Naive thymus-derived CD8-positive, alpha-beta T cell (primary cell): ENCODE measurements at regions of chr2 and their contacts with region 1.

Region 1: GRCh38 chr2:30266051-30266621 is 34.8 kb downstream of the LBH start:
- DNase-seq: peak; percentile 35 to 83 (median 68)
- ATAC-seq: peak; percentile 88 to 97
- H3K4me3 Mint-ChIP-seq: peak overlapping the region; percentile 64 to 90 (median 85)
- H3K27ac Mint-ChIP-seq: peak overlapping the region; percentile 90 to 99 (median 98)
- H3K4me1 Mint-ChIP-seq: peaks cover 37 to 96% (median 90%) of the 10 kb centered on the region in 4 donors
- H3K27me3 Mint-ChIP-seq: no peaks in the 10 kb centered on the region

Region 2: DNA sequence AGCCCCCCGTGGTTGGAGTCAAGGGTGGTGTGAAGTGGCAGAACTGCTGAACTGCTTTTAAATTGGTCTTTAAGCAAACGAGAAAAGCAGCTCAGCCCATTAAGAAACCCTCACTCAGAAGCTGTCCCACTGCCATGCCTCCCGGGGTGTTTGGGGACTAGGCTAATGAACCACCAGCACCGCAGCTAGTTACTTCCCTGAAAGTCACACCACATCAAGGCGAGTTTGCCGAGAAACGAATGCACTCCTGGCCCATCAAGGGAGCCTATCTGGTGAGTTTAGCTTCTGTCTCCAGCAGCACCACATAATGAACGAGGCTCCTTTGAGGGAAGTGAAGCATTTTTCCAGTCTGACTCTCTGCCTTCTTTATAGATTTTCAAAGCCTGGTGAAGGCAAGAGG is 330.1 kb before region 1 on chr2:
- POLR2A ChIA-PET with region 1: no interaction called
- DNase-seq: no peak
- ATAC-seq: no peak
- H3K4me3 Mint-ChIP-seq: no peak overlapping the region
- H3K27ac Mint-ChIP-seq: no peak overlapping the region
- H3K4me1 Mint-ChIP-seq: no peaks in the 10 kb centered on the region
- H3K27me3 Mint-ChIP-seq: peaks cover 11 to 50% (median 23%) of the 10 kb centered on the region in 5 donors

Region 3: GRCh38 chr2:30072250-30072842 is 193.8 kb before region 1 on chr2:
- POLR2A ChIA-PET with region 1: no interaction called
- DNase-seq: peak; percentile 14 to 64 (median 38)
- ATAC-seq: peak; percentile 80 to 86
- H3K4me3 Mint-ChIP-seq: no peak overlapping the region
- H3K27ac Mint-ChIP-seq: peak overlapping the region in 2 of 10 donors; percentile 14 to 23
- H3K4me1 Mint-ChIP-seq: peaks cover 0 to 3% (median 0%) of the 10 kb centered on the region in 4 donors
- H3K27me3 Mint-ChIP-seq: peaks cover 18 to 66% (median 33%) of the 10 kb centered on the region in 5 donors

Region 4: DNA sequence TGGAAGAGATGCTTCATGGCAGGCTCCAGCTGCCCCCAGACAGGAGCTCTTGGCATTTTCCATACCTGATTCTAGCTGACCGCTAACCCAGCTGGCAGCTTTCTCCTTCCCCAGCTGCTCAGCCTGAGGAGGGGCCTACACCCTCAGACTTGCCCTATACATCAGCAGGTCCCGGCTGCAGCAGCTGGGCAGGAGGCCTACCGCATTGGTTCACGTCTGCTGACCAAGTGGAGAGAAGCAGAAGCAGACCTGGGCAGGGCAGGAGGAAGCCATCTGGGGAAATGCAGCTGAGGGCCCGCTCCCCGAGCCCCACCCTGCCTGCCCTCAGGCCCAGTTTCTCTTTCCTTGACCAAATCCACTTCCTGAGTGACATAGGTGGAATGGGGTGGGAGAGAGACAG is 15.9 kb after region 1 on chr2:
- POLR2A ChIA-PET with region 1: interaction called, 12 read pairs
- DNase-seq: peak in 1 of 10 donors; percentile 30
- ATAC-seq: peak in 1 of 2 donors; percentile 67
- H3K4me3 Mint-ChIP-seq: no peak overlapping the region
- H3K27ac Mint-ChIP-seq: peak overlapping the region in 2 of 10 donors; percentile 55 to 60
- H3K4me1 Mint-ChIP-seq: peaks cover 32 to 83% (median 41%) of the 10 kb centered on the region in 4 donors
- H3K27me3 Mint-ChIP-seq: no peaks in the 10 kb centered on the region

Region 5: GRCh38 chr2:30421604-30422443 is 155.7 kb after region 1 on chr2:
- POLR2A ChIA-PET with region 1: interaction called, 11 read pairs
- DNase-seq: peak in 7 of 10 donors; percentile 22 to 76 (median 60)
- ATAC-seq: peak; percentile 66 to 70
- H3K4me3 Mint-ChIP-seq: peak overlapping the region; percentile 59 to 82 (median 70)
- H3K27ac Mint-ChIP-seq: peak overlapping the region; percentile 88 to 98 (median 93)
- H3K4me1 Mint-ChIP-seq: peaks cover 19 to 53% (median 50%) of the 10 kb centered on the region in 4 donors
- H3K27me3 Mint-ChIP-seq: no peaks in the 10 kb centered on the region